ENCODE measurements at regions of chr3 and their contacts with region 1.

Region 1: GRCh38 chr3:128133273-128134084 is 9.9 kb upstream of the RUVBL1 start:
- DNase-seq: peak; percentile 61
- H3K4me3 Mint-ChIP-seq: no peak overlapping the region
- H3K27ac Mint-ChIP-seq: no peak overlapping the region
- H3K4me1 Mint-ChIP-seq: no peaks in the 10 kb centered on the region
- H3K27me3 Mint-ChIP-seq: peaks cover 17% of the 10 kb centered on the region

Region 2: DNA sequence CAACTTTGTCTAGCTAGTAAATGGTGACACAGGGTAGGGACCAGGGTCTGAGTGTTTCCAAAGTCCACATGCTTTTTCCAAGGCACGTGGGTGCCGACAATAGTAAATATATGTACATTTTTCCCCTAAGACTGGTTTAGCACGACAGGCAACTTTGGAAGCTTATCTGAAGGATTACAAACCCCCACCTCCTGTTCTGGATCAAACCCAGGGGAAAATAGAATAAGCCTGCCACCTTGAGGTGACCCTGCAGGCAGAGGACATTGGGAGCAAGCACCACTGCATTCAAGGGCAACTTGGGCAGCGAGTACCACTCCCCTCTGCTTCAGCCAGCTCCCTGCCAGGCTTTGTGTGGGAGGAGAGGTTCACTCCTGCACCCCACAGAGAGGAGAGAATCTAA is 173.6 kb before region 1 on chr3:
- CTCF ChIA-PET with region 1: no interaction called
- DNase-seq: no peak
- H3K4me3 Mint-ChIP-seq: no peak overlapping the region
- H3K27ac Mint-ChIP-seq: no peak overlapping the region
- H3K4me1 Mint-ChIP-seq: no peaks in the 10 kb centered on the region
- H3K27me3 Mint-ChIP-seq: peaks cover 8% of the 10 kb centered on the region

Region 3: GRCh38 chr3:128068211-128068620 is 65.3 kb before region 1 on chr3:
- CTCF ChIA-PET with region 1: interaction called, 17 read pairs
- DNase-seq: peak; percentile 43
- H3K4me3 Mint-ChIP-seq: no peak overlapping the region
- H3K27ac Mint-ChIP-seq: no peak overlapping the region
- H3K4me1 Mint-ChIP-seq: no peaks in the 10 kb centered on the region
- H3K27me3 Mint-ChIP-seq: no peaks in the 10 kb centered on the region

Region 4: GRCh38 chr3:128075516-128076482 is 57.7 kb before region 1 on chr3:
- CTCF ChIA-PET with region 1: interaction called, 17 read pairs
- DNase-seq: peak; percentile 87
- H3K4me3 Mint-ChIP-seq: peak overlapping the region; percentile 47
- H3K27ac Mint-ChIP-seq: peak overlapping the region; percentile 64
- H3K4me1 Mint-ChIP-seq: peaks cover 16% of the 10 kb centered on the region
- H3K27me3 Mint-ChIP-seq: peaks cover 25% of the 10 kb centered on the region

Region 5: DNA sequence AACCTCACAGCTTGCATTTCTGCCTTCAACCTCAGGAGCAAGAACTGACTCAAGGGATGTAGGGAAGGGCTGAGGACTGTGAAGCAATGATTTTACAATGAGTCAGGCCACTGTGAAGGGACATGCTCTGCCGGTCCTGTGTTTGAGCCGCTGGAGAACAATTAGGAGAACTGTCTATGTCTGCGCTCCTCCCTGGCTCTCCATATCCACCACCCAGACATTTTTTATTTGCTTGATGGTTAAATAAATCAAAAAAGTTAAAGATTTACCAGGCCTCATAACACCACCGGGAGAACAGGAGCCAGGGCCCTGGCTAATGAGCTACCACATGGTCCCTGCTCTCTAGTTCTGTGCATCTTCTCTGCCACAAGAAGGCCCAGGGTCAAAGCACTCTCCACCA is 51.6 kb before region 1 on chr3:
- CTCF ChIA-PET with region 1: interaction called, 15 read pairs
- DNase-seq: no peak
- H3K4me3 Mint-ChIP-seq: no peak overlapping the region
- H3K27ac Mint-ChIP-seq: no peak overlapping the region
- H3K4me1 Mint-ChIP-seq: no peaks in the 10 kb centered on the region
- H3K27me3 Mint-ChIP-seq: peaks cover 11% of the 10 kb centered on the region

Region 6: DNA sequence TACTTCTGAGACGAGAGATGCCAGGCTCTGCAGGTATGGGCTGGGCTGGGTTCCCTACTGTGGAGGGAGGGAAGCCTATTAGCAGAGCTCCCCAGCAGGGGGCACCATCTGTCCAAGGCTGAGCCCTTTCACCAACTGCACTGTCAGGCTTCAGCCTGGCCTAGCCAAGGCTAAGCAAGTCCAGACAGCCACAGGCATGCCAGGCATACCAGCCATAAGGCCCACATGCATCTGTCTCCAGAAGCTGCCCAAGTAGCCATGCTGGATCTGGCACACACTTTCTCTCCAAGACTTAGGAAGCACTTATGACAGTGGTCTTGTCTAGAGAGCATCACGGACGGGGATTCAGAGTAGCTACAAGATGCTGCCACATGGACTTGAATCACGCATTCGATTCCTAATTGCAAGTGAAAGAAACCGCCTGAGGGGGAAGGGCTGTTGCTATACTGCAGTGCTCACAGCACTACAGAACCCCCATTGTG is 38.2 kb before region 1 on chr3:
- CTCF ChIA-PET with region 1: interaction called, 109 read pairs
- DNase-seq: peak; percentile 87
- H3K4me3 Mint-ChIP-seq: no peak overlapping the region
- H3K27ac Mint-ChIP-seq: no peak overlapping the region
- H3K4me1 Mint-ChIP-seq: peaks cover 14% of the 10 kb centered on the region
- H3K27me3 Mint-ChIP-seq: no peaks in the 10 kb centered on the region

Region 7: DNA sequence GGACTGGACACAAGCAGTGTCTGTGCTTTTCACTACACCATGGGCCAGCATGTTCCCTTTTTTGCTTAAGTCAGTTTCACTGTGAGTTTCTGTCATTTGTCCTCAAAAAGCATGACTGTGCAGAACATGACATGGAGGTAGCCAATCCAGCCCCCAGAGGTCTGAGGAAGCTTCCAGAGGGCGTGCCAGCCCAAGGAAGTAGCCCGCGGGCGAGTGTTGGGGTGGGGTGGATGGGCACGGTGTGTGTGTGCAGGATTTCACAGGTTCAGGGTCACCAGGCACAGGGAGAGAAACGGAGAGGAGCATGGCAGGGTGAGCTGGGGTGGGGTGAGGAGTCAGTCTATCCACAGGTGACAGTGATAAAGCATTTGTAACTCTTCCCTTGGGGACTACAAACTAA is 11.9 kb after region 1 on chr3:
- CTCF ChIA-PET with region 1: interaction called, 12 read pairs
- DNase-seq: no peak
- H3K4me3 Mint-ChIP-seq: no peak overlapping the region
- H3K27ac Mint-ChIP-seq: no peak overlapping the region
- H3K4me1 Mint-ChIP-seq: no peaks in the 10 kb centered on the region
- H3K27me3 Mint-ChIP-seq: peaks cover 4% of the 10 kb centered on the region